ENCODE measurements at regions of chr17 and their contacts with region 1.

Region 1: GRCh38 chr17:41738077-41738735 is 3.8 kb upstream of the HAP1 start:
- DNase-seq: peak; percentile 88 to 91
- H3K4me3 ChIP-seq: no peak overlapping the region
- H3K4me3 Mint-ChIP-seq: no peak overlapping the region
- H3K27ac Mint-ChIP-seq: peak overlapping the region; percentile 51
- H3K4me1 ChIP-seq: peaks cover 31% of the 10 kb centered on the region
- H3K4me1 Mint-ChIP-seq: peaks cover 31% of the 10 kb centered on the region
- H3K27me3 ChIP-seq: no peaks in the 10 kb centered on the region; the same call in 1 of the 2 replicates
- H3K27me3 Mint-ChIP-seq: peaks cover 15% of the 10 kb centered on the region
- CTCF ChIP-seq: peak; percentile 98

Region 2: DNA sequence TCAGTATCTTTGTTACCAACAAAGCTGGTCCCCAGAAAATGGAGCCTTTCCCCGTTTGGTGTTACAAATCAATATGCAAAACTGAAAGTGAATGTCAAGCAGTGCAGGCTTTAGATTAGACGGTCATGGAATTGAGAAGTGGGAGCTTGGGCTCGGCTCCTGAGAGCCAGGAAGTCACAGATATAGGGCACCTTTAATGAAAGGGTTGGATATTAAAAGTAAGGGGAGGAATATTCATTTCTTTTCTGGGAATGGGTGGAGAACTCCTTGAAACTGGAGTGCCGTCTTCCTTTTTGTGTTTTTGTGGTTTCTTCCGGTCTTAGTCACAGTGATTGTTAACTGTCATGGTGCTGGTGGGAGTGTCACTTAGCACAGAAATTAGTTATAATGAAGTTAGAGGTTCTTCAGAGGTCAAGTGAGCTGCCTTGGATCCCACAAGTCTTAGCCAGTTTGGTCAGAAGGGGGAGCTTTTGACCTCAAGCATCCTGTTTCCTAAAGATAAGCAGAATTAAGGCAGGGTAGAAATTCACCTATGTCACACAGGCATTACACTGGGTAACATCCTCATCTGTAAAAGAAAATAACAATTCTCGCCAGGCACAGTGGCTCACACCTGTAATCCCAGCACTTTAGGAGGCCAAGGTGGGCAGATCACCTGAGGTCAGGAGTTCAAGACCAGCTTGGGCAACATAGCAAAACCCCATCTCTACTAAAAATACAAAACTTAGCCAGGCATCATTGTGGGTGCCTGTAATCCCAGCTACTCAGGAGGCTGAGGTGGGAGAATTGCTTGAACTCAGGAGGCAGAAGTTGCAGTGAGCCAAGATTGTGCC is 59.1 kb before region 1 on chr17:
- CTCF ChIA-PET with region 1: no interaction called
- POLR2A ChIA-PET with region 1: no interaction called
- intact Hi-C with region 1: no loop called
- DNase-seq: no peak
- H3K4me3 ChIP-seq: no peak overlapping the region
- H3K4me3 Mint-ChIP-seq: no peak overlapping the region
- H3K27ac Mint-ChIP-seq: no peak overlapping the region
- H3K4me1 ChIP-seq: peaks cover 23% of the 10 kb centered on the region
- H3K4me1 Mint-ChIP-seq: peaks cover 26% of the 10 kb centered on the region
- H3K27me3 ChIP-seq: no peaks in the 10 kb centered on the region
- H3K27me3 Mint-ChIP-seq: no peaks in the 10 kb centered on the region
- CTCF ChIP-seq: peak in 1 of 2 experiments; percentile 18

Region 3: DNA sequence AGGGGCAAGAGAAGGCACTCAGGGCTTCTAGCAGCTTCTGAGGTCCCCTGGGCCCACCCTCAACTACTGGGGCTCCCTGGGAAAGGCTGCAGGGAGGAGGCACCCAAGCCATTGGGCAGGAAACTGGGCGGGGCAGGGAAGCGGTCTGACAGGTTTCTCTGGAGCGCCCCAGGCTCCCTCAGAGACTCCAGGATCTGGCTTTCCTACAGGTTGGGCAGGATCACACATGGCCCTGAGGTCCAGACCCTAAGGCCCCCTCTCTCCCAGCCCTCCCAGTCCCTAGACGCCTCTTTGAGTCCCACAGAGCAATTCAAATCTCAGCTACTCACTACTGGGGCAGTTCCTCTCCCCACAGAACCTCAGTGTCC is 34.0 kb after region 1 on chr17:
- CTCF ChIA-PET with region 1: no interaction called
- POLR2A ChIA-PET with region 1: no interaction called
- intact Hi-C with region 1: loop called (anchors 1 kb)
- DNase-seq: peak; percentile 90 to 92
- H3K4me3 ChIP-seq: peak overlapping the region; percentile 20
- H3K4me3 Mint-ChIP-seq: peak overlapping the region; percentile 64
- H3K27ac Mint-ChIP-seq: peak overlapping the region; percentile 92
- H3K4me1 ChIP-seq: peaks cover 58% of the 10 kb centered on the region
- H3K4me1 Mint-ChIP-seq: peaks cover 41% of the 10 kb centered on the region
- H3K27me3 ChIP-seq: no peaks in the 10 kb centered on the region
- H3K27me3 Mint-ChIP-seq: no peaks in the 10 kb centered on the region
- CTCF ChIP-seq: no peak

Region 4: GRCh38 chr17:41801374-41802271 is 63.4 kb after region 1 on chr17:
- CTCF ChIA-PET with region 1: interaction called, 14 read pairs
- POLR2A ChIA-PET with region 1: interaction called, 11 read pairs
- intact Hi-C with region 1: loop called (anchors 1 kb)
- DNase-seq: peak; percentile 91 to 94
- H3K4me3 ChIP-seq: peak overlapping the region; percentile 26
- H3K4me3 Mint-ChIP-seq: peak overlapping the region; percentile 83
- H3K27ac Mint-ChIP-seq: peak overlapping the region; percentile 99
- H3K4me1 ChIP-seq: peaks cover 31% of the 10 kb centered on the region
- H3K4me1 Mint-ChIP-seq: peaks cover 38% of the 10 kb centered on the region
- H3K27me3 ChIP-seq: no peaks in the 10 kb centered on the region
- H3K27me3 Mint-ChIP-seq: no peaks in the 10 kb centered on the region
- CTCF ChIP-seq: peak; percentile 97

Region 5: DNA sequence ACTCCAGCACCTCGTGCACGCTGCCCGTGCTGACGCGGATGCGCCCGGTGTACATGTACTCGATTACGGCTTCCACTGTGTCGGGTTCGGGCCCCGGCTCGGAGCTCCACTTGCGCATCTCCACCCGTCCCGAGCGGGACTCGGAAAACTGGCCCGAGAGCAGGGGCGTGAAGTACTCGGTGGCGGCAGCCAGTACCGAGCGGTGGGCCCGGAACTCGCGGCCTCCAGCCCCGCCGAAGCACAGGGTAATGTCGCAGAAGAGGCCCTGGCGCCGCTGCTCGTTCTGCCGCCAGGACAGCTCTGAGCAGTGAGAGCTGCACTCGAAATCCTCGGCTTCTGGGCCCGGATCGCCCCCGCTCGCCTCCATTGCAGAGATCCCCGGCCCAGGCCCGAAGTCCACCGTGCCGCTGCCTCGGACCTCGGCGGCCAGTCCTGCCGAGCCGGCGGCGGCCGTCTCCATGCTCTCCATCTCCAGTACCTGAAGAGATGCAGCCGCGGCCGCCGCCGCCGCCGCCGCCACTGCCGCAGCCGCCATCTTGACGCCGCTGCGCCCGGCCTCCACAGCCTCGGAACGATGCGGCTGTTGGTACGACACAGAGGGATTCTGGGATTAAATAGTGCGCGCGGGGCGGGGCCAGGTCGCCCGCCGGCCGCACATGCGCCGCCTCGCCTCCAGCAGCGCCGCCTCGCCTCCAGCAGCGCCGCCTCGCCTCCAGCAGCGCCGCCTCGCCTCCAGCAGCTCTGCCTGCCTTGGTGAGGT is 126.8 kb after region 1 on chr17 and contains the start of gene KLHL11:
- CTCF ChIA-PET with region 1: no interaction called
- POLR2A ChIA-PET with region 1: interaction called, 3 read pairs
- intact Hi-C with region 1: loop called (anchors 1 kb)
- DNase-seq: peak; percentile 92 to 94
- H3K4me3 ChIP-seq: peak within 1 kb of the TSS; percentile 97
- H3K4me3 Mint-ChIP-seq: no peak within 1 kb of the TSS
- H3K27ac Mint-ChIP-seq: no peak within 1 kb of the TSS
- H3K4me1 ChIP-seq: peaks cover 15% of the 10 kb centered on the region
- H3K4me1 Mint-ChIP-seq: peaks cover 7% of the 10 kb centered on the region
- H3K27me3 ChIP-seq: no peaks in the 10 kb centered on the region
- H3K27me3 Mint-ChIP-seq: no peaks in the 10 kb centered on the region
- CTCF ChIP-seq: no peak
- total RNA-seq, gene KLHL11: 20.3 and 22.2 TPM in 2 replicates

Region 6: GRCh38 chr17:41885733-41886132 is 147.5 kb after region 1 on chr17:
- CTCF ChIA-PET with region 1: no interaction called
- POLR2A ChIA-PET with region 1: interaction called, 5 read pairs
- intact Hi-C with region 1: loop called (anchors 1 kb)
- DNase-seq: peak in 1 of 2 experiments; percentile 37
- H3K4me3 ChIP-seq: no peak overlapping the region
- H3K4me3 Mint-ChIP-seq: no peak overlapping the region
- H3K27ac Mint-ChIP-seq: no peak overlapping the region
- H3K4me1 ChIP-seq: no peaks in the 10 kb centered on the region
- H3K4me1 Mint-ChIP-seq: no peaks in the 10 kb centered on the region
- H3K27me3 ChIP-seq: no peaks in the 10 kb centered on the region
- H3K27me3 Mint-ChIP-seq: no peaks in the 10 kb centered on the region
- CTCF ChIP-seq: peak; percentile 35

Region 7: GRCh38 chr17:41959336-41960095 is 221.3 kb after region 1 on chr17:
- CTCF ChIA-PET with region 1: interaction called, 5 read pairs
- POLR2A ChIA-PET with region 1: no interaction called
- intact Hi-C with region 1: loop called (anchors 1 kb)
- DNase-seq: peak; percentile 68 to 69
- H3K4me3 ChIP-seq: no peak overlapping the region
- H3K4me3 Mint-ChIP-seq: no peak overlapping the region
- H3K27ac Mint-ChIP-seq: peak overlapping the region; percentile 37
- H3K4me1 ChIP-seq: peaks cover 20% of the 10 kb centered on the region
- H3K4me1 Mint-ChIP-seq: peaks cover 16% of the 10 kb centered on the region
- H3K27me3 ChIP-seq: no peaks in the 10 kb centered on the region
- H3K27me3 Mint-ChIP-seq: no peaks in the 10 kb centered on the region
- CTCF ChIP-seq: peak; percentile 60 to 62